Heart right ventricle (tissue), 16 donors: ENCODE measurements at regions of chr11 and their contacts with region 1.

Region 1: DNA sequence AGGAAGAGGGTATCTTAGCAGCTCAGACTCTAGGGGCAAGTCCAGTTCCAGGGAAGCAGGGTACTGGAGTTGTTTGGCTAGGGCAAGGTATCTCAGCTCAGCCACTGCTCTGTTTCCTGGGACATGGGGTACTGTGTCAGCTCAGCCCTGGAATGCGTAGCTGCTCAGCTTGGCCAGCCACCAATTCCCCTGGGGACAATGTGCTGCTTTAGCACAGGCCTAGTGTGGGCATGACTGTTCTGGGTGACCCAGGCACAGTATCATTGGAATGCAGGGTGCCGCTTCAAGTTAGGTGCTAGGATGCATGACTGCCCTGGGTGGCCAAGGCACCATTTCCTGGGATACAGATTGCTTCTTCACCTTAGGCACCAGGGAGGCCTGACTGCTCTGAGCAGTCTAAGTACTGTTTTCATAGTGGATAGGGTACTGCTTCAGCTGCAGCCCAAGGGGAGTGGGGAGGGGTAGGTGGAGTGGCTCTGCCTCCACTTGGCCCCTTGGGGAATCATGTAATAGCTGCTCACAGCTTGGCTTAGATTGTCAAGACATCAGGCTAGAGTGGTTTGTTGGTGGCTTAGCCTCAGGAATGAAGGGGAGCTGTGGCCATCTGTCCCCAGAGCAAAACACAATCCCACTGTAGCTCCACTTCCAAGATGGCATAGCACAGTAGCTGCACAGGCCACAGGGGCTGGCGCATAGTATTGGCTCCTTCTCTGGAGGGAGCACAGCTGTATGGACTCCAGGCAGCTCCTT is 36.0 kb downstream of the MADD start:
- DNase-seq: peak; percentile 65 to 74
- ATAC-seq: peak; percentile 90 to 98 (median 96)
- H3K4me3 ChIP-seq: no peak overlapping the region
- H3K27ac ChIP-seq: peak overlapping the region; percentile 18 to 86 (median 74)
- H3K4me1 ChIP-seq: peaks cover 6 to 26% (median 13%) of the 10 kb centered on the region in 9 donors
- H3K27me3 ChIP-seq: no peaks in the 10 kb centered on the region
- CTCF ChIP-seq: no peak

Region 2: DNA sequence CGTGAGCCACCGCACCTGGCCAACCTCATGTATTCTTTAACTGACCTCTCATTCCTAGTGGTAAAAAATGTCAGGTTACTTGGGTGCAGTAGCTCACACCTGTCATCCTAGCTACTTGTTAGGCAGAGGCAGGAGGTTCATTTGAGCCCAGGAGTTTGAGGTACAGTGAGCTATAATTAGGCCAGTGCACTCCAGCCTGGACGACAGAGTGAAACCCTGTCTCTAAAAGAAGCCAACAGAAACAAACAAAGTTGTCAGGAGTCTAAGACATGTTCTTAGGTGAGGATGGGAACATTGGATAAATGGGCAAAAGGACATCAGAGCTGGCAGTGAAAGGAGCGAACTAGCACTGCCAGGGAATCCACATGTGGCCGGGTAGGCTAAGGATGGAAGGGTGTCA is 17.8 kb before region 1 on chr11:
- intact Hi-C with region 1: loop called in 1 of 10 experiments (anchors 1 kb)
- DNase-seq: no peak
- ATAC-seq: peak; percentile 50 to 91 (median 68)
- H3K4me3 ChIP-seq: no peak overlapping the region
- H3K27ac ChIP-seq: peak overlapping the region; percentile 31 to 78 (median 65)
- H3K4me1 ChIP-seq: peaks cover 0 to 40% (median 21%) of the 10 kb centered on the region in 9 donors
- H3K27me3 ChIP-seq: no peaks in the 10 kb centered on the region
- CTCF ChIP-seq: no peak